T-cell (primary cell): ENCODE measurements at regions of chr1 and their contacts with region 1.

Region 1: DNA sequence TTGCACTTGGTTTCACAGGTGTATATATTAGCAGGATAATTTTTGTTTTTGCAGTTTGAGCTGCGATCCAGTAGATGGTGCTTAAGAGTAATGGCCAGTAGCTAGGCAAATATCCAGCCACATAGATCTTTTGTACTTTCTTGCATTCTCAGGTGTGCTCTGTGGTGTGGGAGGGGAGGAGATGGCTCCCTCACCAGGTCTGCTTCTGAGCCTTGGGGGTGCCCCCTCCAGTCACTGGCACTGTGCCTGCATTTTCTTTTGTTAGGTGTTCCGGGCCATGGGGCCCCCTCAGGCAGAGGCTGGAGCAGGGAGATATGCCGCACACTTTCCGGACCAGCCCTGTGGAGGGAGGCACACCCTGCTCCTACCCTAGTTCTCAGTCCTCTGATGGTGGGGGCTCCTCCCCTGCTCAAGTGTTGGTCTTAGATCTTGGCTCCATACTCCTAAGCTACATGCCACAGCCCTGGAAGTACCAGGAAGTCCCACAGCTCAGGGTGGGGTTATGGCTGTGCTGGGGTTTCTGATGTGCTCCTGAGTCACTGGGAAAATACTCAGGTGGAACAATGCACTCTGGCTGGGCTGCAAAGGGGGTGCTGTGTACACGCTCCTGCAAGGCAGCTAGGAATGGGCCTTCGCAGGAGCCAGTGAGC is 197.6 kb upstream of the DMRTA2 start:
- DNase-seq: no peak
- ATAC-seq: no peak
- H3K4me3 ChIP-seq: no peak overlapping the region
- H3K4me3 Mint-ChIP-seq: no peak overlapping the region
- H3K27ac ChIP-seq: no peak overlapping the region
- H3K27ac Mint-ChIP-seq: no peak overlapping the region
- H3K4me1 ChIP-seq: no peaks in the 10 kb centered on the region
- H3K4me1 Mint-ChIP-seq: no peaks in the 10 kb centered on the region
- H3K27me3 ChIP-seq: no peaks in the 10 kb centered on the region
- H3K27me3 Mint-ChIP-seq: no peaks in the 10 kb centered on the region

Region 2: DNA sequence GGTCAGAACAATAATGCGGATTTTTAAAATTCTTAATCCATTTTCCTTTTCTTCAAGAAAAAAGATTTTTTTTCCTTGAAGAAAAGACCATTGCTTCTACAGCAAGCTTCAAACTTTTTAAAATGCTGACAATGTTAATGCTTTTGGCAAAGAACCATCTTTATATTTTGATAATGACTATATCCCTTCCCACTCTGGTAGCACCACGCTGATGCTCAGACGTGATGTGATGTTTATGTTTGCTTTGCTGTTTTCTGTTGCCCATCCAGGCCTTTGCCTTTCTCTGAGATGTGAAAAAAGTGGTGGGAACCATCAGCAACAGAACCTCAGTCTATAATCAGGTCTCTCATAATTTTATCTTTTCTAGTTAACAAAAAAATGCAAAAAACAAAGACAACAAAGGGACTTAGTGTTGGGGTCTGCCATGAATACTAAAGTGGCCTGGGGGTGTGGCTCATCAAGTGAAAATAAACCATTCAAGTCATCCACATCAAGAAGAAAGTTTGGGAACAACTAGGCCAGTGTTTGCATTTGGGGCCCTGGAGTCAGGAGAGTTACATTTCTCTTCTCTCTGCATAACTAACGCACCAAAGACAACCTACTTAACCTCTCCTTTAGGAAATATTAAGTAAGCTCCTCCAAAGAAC is 47.0 kb after region 1 on chr1:
- CTCF ChIA-PET with region 1: no interaction called
- POLR2A ChIA-PET with region 1: interaction called in 1 of 2 experiments, 13 read pairs
- DNase-seq: no peak
- ATAC-seq: no peak
- H3K4me3 ChIP-seq: no peak overlapping the region
- H3K4me3 Mint-ChIP-seq: no peak overlapping the region
- H3K27ac ChIP-seq: no peak overlapping the region
- H3K27ac Mint-ChIP-seq: no peak overlapping the region
- H3K4me1 ChIP-seq: no peaks in the 10 kb centered on the region
- H3K4me1 Mint-ChIP-seq: no peaks in the 10 kb centered on the region
- H3K27me3 ChIP-seq: no peaks in the 10 kb centered on the region
- H3K27me3 Mint-ChIP-seq: no peaks in the 10 kb centered on the region

Region 3: DNA sequence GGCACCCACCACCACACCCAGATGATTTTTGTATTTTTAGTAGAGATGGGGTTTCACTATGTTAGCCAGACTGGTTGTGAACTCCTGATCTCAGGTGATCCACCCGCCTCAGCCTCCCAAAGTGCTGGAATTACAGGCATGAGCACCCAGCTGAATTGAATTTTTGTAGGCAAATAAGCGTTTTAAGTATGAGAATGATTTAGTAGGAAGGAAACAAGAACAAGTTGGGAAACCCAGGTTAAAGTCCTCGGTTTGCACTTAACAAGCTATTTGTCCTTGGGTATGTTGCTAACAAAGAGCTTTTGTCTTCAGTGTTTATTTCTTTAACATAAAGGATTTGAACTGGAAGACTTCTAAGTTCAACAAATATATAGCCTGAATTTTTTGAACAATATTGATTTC is 1459.2 kb after region 1 on chr1:
- CTCF ChIA-PET with region 1: no interaction called
- POLR2A ChIA-PET with region 1: no interaction called
- DNase-seq: no peak
- ATAC-seq: no peak
- H3K4me3 ChIP-seq: no peak overlapping the region
- H3K4me3 Mint-ChIP-seq: no peak overlapping the region
- H3K27ac ChIP-seq: no peak overlapping the region
- H3K27ac Mint-ChIP-seq: peak overlapping the region in 1 of 2 donors; percentile 59
- H3K4me1 ChIP-seq: no peaks in the 10 kb centered on the region
- H3K4me1 Mint-ChIP-seq: peaks cover 0 to 5% (median 3%) of the 10 kb centered on the region in 3 donors
- H3K27me3 ChIP-seq: no peaks in the 10 kb centered on the region
- H3K27me3 Mint-ChIP-seq: no peaks in the 10 kb centered on the region